ENCODE measurements at regions of chr2 and their contacts with region 1.

Region 1: GRCh38 chr2:49490710-49491109 is 336.4 kb upstream of the FSHR start:
- DNase-seq: no peak
- ATAC-seq: no peak
- H3K4me3 ChIP-seq: no peak overlapping the region
- H3K4me3 Mint-ChIP-seq: peak overlapping the region in 1 of 10 donors; percentile 18
- H3K27ac ChIP-seq: no peak overlapping the region
- H3K27ac Mint-ChIP-seq: no peak overlapping the region
- H3K4me1 ChIP-seq: no peaks in the 10 kb centered on the region
- H3K4me1 Mint-ChIP-seq: no peaks in the 10 kb centered on the region
- H3K27me3 ChIP-seq: no peaks in the 10 kb centered on the region
- H3K27me3 Mint-ChIP-seq: no peaks in the 10 kb centered on the region

Region 2: DNA sequence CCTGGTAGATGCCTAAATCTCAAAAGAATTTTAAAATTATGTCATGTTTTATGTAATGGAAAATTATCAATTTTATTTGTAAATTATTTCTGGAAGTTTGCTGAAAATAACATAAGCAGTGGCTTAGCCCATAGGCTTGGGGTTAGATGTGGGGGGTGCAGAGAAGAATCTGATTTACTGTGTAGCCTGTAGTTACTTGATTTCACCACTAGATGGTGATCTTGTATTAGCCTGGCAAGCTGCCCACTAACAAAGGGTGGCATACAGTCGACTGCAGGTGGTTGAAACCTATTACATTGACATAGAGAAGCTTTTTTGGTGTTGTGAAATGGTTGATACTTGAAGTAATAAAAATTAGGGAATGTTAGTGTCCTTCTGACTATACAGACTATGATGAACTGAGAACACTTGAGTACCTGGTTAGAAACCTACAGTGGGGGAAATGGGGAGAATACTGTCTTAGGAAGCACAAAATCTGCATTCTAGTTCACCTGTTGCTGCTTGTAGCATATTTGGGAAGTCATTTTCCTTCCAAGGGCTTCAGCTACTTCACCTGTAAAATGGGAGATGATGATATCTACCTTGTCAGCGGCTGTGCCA is 544.2 kb before region 1 on chr2:
- CTCF ChIA-PET with region 1: no interaction called
- POLR2A ChIA-PET with region 1: no interaction called
- intact Hi-C with region 1: loop called in 1 of 2 experiments (anchors 2 kb)
- DNase-seq: peak in 7 of 9 donors; percentile 16 to 49 (median 41)
- ATAC-seq: peak; percentile 86
- H3K4me3 ChIP-seq: no peak overlapping the region
- H3K4me3 Mint-ChIP-seq: no peak overlapping the region
- H3K27ac ChIP-seq: no peak overlapping the region
- H3K27ac Mint-ChIP-seq: no peak overlapping the region
- H3K4me1 ChIP-seq: no peaks in the 10 kb centered on the region
- H3K4me1 Mint-ChIP-seq: no peaks in the 10 kb centered on the region
- H3K27me3 ChIP-seq: no peaks in the 10 kb centered on the region
- H3K27me3 Mint-ChIP-seq: peaks cover 0 to 10% (median 0%) of the 10 kb centered on the region in 5 donors

Region 3: DNA sequence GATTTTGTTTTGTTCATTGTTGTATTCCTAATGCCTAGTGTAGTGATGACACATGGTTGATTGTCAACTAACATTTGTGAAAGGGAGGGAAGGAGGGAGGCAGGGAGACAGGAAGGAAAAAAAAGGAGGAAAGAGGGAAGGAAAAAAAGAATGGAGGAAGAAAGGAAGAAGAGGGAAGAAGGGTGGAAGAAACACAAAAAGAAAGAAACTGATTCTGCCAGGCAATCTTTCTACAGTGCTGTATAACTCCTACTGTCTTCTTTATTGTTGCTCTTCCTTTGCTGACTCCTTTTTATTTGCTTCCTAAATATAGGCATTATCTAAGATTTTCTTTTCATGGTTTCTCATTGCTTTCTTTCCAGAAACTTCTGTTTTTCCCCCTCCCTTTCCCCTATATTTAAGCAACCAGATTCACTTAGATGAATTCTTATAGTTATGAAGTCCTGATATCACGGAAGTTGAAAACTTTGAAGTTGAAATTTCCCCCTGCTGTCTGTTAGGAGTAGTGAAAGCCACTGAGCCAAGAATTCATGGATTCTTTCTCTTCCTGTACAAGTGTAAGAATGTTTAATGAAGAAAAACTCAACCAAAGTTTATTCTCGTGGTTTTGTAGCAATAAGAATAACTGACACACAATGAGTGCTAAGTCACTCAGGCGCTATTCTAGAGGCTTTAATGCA is 31.3 kb before region 1 on chr2:
- CTCF ChIA-PET with region 1: no interaction called
- POLR2A ChIA-PET with region 1: no interaction called
- intact Hi-C with region 1: no loop called
- DNase-seq: no peak
- ATAC-seq: no peak
- H3K4me3 ChIP-seq: no peak overlapping the region
- H3K4me3 Mint-ChIP-seq: no peak overlapping the region
- H3K27ac ChIP-seq: no peak overlapping the region
- H3K27ac Mint-ChIP-seq: no peak overlapping the region
- H3K4me1 ChIP-seq: no peaks in the 10 kb centered on the region
- H3K4me1 Mint-ChIP-seq: no peaks in the 10 kb centered on the region
- H3K27me3 ChIP-seq: no peaks in the 10 kb centered on the region
- H3K27me3 Mint-ChIP-seq: no peaks in the 10 kb centered on the region

Measured in naive thymus-derived CD4-positive, alpha-beta T cell (primary cell).